K562 (cell line): ENCODE measurements at regions of chr11 and their contacts with region 1.

Region 1: DNA sequence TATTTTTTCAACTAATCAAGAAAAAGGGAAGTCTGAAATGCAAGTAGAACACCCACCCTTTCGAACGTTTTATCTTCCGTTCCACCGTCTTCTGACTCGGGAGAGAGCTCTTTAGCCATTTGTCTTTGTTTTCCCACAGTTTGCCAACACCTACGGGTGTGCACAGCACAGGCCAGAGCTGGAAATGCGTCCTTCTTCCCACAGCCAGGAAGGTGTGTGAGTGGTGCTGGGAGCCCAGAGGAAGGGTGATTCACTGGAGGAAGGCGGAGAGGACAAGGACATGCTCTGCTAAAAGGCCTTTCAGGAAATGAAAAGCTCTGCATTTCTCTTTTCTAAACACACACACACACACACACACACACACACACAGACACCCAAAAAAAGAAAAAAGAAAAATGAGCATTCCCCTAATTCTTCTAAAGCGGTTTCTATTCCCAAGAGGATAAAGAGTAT is 18.5 kb downstream of the ENDOD1 start:
- DNase-seq: peak in 1 of 4 experiments; percentile 41
- ATAC-seq: peak; percentile 10
- H3K4me3 ChIP-seq: no peak overlapping the region; the same call in 1 of the 2 replicates
- H3K27ac ChIP-seq: peak overlapping the region; percentile 88
- H3K4me1 ChIP-seq: peaks cover 20 to 56% of the 10 kb centered on the region in 2 experiments
- H3K27me3 ChIP-seq: no peaks in the 10 kb centered on the region
- CTCF ChIP-seq: no peak
- EP300 ChIP-seq: no peak
- POLR2A ChIP-seq: no peak
- RAD21 ChIP-seq: no peak

Region 2: GRCh38 chr11:95119374-95120060 is 11.3 kb after region 1 on chr11:
- CTCF ChIA-PET with region 1: no interaction called
- POLR2A ChIA-PET with region 1: interaction called, 11 read pairs
- in situ Hi-C with region 1: no loop called
- intact Hi-C with region 1: no loop called
- DNase-seq: no peak
- ATAC-seq: no peak
- H3K4me3 ChIP-seq: no peak overlapping the region
- H3K27ac ChIP-seq: no peak overlapping the region
- H3K4me1 ChIP-seq: peaks cover 6 to 7% of the 10 kb centered on the region in 2 experiments; a peak in 1 of 5 replicates
- H3K27me3 ChIP-seq: no peaks in the 10 kb centered on the region
- CTCF ChIP-seq: no peak
- EP300 ChIP-seq: no peak
- POLR2A ChIP-seq: no peak
- RAD21 ChIP-seq: no peak

Region 3: GRCh38 chr11:95531116-95531515 is 422.9 kb after region 1 on chr11:
- CTCF ChIA-PET with region 1: no interaction called
- POLR2A ChIA-PET with region 1: no interaction called
- in situ Hi-C with region 1: no loop called
- intact Hi-C with region 1: no loop called
- DNase-seq: no peak
- ATAC-seq: no peak
- H3K4me3 ChIP-seq: no peak overlapping the region
- H3K27ac ChIP-seq: no peak overlapping the region
- H3K4me1 ChIP-seq: no peaks in the 10 kb centered on the region
- H3K27me3 ChIP-seq: no peaks in the 10 kb centered on the region; a peak in 1 of 5 replicates
- CTCF ChIP-seq: no peak
- EP300 ChIP-seq: no peak
- POLR2A ChIP-seq: no peak
- RAD21 ChIP-seq: no peak